ENCODE measurements at regions of chr5 and their contacts with region 1.

Region 1: GRCh38 chr5:140357726-140358093 is 2.3 kb upstream of the SLC4A9 start:
- DNase-seq: peak; percentile 38
- H3K4me3 ChIP-seq: peak overlapping the region in 2 of 4 donors; percentile 13 to 47
- H3K27ac ChIP-seq: no peak overlapping the region
- H3K4me1 ChIP-seq: peaks cover 7 to 13% (median 8%) of the 10 kb centered on the region in 3 donors
- H3K27me3 ChIP-seq: no peaks in the 10 kb centered on the region
- CTCF ChIP-seq: peak; percentile 78 to 94 (median 90)
- POLR2A ChIP-seq: no peak

Region 2: GRCh38 chr5:140162781-140163180 is 194.9 kb before region 1 on chr5:
- intact Hi-C with region 1: loop called (anchors 5 kb)
- DNase-seq: no peak
- H3K4me3 ChIP-seq: no peak overlapping the region
- H3K27ac ChIP-seq: no peak overlapping the region
- H3K4me1 ChIP-seq: peaks cover 0 to 12% (median 0%) of the 10 kb centered on the region in 3 donors
- H3K27me3 ChIP-seq: no peaks in the 10 kb centered on the region
- CTCF ChIP-seq: no peak
- POLR2A ChIP-seq: no peak

Region 3: GRCh38 chr5:140595538-140596300 is 238.0 kb after region 1 on chr5:
- intact Hi-C with region 1: no loop called
- DNase-seq: no peak
- H3K4me3 ChIP-seq: no peak overlapping the region
- H3K27ac ChIP-seq: peak overlapping the region in 3 of 4 donors; percentile 14 to 65 (median 36)
- H3K4me1 ChIP-seq: peaks cover 0 to 30% (median 6%) of the 10 kb centered on the region in 3 donors
- H3K27me3 ChIP-seq: no peaks in the 10 kb centered on the region
- CTCF ChIP-seq: no peak
- POLR2A ChIP-seq: no peak